Activated T-helper 1 cell treated with anti-CD3 and anti-CD28 coated beads, Interleukin-12 subunit alpha, Interleukin-12 subunit beta, Interleukin-2, Interleukin-4 antibody, amounts not matched to agents 30 ng/mL and 10 ng/mL and 1 ng/mL, durations not matched to agents 14 hours and 24 hours and 36 hours (primary cell): ENCODE measurements at regions of chr11 and their contacts with region 1.

Region 1: DNA sequence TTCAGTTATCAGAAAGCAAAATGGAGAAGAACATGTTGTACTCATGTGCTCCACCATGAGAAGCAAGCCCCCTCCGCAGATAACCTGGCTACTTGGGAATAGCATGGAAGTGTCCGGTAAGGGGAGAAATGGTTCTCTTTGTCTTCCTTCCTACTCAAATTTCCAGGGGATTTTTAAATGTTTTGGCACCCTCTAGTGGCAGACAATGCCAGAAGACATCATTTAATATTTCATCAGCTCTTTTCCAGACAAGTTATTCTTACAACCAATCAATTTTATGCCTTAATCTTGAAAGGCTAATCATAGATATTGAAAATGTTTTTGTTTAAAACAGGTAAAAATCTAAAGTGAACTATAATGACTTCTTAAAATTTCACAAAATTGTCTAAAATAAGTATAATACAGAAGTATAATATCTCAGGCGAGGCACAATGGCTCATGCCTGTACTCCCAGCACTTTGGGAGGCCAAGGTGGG is 15.7 kb downstream of the CRTAM start:
- DNase-seq: peak; percentile 15
- H3K4me3 Mint-ChIP-seq: no peak overlapping the region
- H3K27ac Mint-ChIP-seq: no peak overlapping the region
- H3K4me1 Mint-ChIP-seq: peaks cover 51% of the 10 kb centered on the region
- H3K27me3 Mint-ChIP-seq: peaks cover 13% of the 10 kb centered on the region

Region 2: DNA sequence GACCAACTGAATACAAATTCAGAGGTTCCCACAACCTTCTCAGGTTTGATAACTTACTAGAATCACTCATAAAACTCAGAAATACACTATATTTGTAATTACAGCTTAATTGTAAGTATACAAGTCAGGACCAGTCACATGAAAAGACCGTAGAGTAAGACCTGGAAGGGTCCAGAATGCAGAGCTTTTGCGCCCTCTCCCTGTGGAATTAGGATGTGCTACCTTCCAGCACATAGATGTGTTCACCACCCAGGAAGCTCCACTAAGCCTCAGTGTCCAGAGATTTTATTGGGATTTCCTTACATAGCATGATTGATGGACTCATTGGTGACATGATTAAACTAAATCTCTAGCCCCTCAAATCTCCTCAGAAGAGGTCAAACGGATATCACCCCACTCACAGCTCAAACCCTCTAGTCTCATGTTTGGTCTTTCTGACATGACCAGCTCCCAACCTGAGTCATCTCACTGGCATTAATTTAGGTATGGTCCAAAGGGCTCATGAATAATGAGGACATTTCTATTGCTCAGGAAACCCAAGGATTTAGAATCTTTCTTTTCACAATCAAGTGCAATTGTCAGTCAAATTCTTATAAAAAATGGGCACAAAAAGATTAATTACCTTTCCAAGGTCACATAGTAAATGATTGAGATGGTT is 275.7 kb before region 1 on chr11:
- intact Hi-C with region 1: loop called (anchors 1 kb)
- DNase-seq: no peak
- H3K4me3 Mint-ChIP-seq: no peak overlapping the region
- H3K27ac Mint-ChIP-seq: no peak overlapping the region
- H3K4me1 Mint-ChIP-seq: peaks cover 12% of the 10 kb centered on the region
- H3K27me3 Mint-ChIP-seq: peaks cover 7% of the 10 kb centered on the region

Region 3: GRCh38 chr11:122721964-122722266 is 132.1 kb before region 1 on chr11:
- intact Hi-C with region 1: loop called (anchors 1 kb)
- DNase-seq: no peak
- H3K4me3 Mint-ChIP-seq: no peak overlapping the region
- H3K27ac Mint-ChIP-seq: no peak overlapping the region
- H3K4me1 Mint-ChIP-seq: peaks cover 50% of the 10 kb centered on the region
- H3K27me3 Mint-ChIP-seq: peaks cover 12% of the 10 kb centered on the region

Region 4: DNA sequence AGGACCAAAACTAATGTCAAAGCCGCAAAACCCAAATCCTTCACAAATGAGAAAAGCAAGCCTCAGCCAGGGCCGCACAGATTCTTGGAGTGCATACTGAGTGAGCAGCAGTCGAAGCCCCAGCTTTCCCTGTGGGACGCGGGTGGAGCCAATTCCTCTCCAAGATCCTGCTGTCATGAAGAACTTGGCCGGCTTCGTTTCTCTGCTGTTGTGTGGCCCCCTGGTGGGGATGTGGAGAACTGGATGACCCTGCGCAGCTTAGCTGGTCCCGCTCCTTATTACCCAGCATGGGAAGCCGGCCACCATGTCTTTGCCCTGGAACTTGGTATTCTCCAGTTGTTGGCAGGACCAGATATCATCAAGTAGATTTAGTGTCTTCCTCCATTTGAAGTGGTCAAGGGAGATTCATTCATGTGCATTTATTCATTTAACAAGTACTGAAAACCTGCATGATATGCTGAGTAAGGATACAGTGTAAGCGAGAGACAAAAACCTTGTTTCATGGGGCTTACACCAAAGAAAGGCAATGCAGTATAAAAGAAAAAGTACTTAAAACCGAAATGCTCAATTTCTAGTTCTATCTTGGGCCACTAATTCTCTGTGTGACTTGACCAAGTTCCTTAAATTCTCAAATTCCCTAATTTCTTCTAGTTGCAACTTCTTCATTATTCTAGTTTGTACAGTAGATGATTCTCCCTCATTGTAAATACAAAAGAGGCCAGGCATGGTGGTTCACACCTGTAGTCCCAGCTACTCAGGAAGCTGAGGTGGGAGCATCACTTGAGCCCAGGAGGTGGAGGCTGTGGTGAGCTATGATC is 72.4 kb before region 1 on chr11:
- intact Hi-C with region 1: loop called (anchors 1 kb)
- DNase-seq: peak; percentile 50
- H3K4me3 Mint-ChIP-seq: no peak overlapping the region
- H3K27ac Mint-ChIP-seq: no peak overlapping the region
- H3K4me1 Mint-ChIP-seq: peaks cover 12% of the 10 kb centered on the region
- H3K27me3 Mint-ChIP-seq: peaks cover 10% of the 10 kb centered on the region

Region 5: DNA sequence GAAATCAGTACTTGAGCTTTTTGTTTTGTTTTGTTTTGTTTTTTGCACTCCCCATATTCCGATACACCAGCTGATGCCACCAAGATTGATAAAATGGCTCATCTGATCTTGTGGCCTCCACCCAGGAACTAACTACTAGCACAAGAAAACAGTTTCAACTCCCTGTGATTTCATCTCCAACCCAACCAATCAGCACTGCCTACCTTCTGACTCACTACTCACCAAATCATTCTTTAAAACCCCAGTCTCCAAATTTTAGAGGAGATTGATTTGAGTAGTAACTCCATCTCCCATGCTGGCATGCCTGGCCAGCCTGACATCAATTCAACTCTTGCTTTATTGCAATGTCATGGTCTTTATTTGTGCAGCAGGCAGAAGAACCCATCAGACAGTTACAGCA is 31.8 kb before region 1 on chr11:
- intact Hi-C with region 1: no loop called
- DNase-seq: no peak
- H3K4me3 Mint-ChIP-seq: no peak overlapping the region
- H3K27ac Mint-ChIP-seq: no peak overlapping the region
- H3K4me1 Mint-ChIP-seq: no peaks in the 10 kb centered on the region
- H3K27me3 Mint-ChIP-seq: peaks cover 14% of the 10 kb centered on the region

Region 6: GRCh38 chr11:122843281-122844141 is 10.5 kb before region 1 on chr11:
- intact Hi-C with region 1: loop called (anchors 1 kb)
- DNase-seq: no peak
- H3K4me3 Mint-ChIP-seq: peak overlapping the region; percentile 55
- H3K27ac Mint-ChIP-seq: peak overlapping the region; percentile 77
- H3K4me1 Mint-ChIP-seq: peaks cover 24% of the 10 kb centered on the region
- H3K27me3 Mint-ChIP-seq: peaks cover 14% of the 10 kb centered on the region

Region 7: GRCh38 chr11:123381817-123382554 is 528.0 kb after region 1 on chr11:
- intact Hi-C with region 1: loop called (anchors 2 kb)
- DNase-seq: peak; percentile 70
- H3K4me3 Mint-ChIP-seq: peak overlapping the region; percentile 62
- H3K27ac Mint-ChIP-seq: peak overlapping the region; percentile 79
- H3K4me1 Mint-ChIP-seq: peaks cover 49% of the 10 kb centered on the region
- H3K27me3 Mint-ChIP-seq: no peaks in the 10 kb centered on the region